Panc1 (cell line): ENCODE measurements at regions of chr17 and their contacts with region 1.

Region 1: DNA sequence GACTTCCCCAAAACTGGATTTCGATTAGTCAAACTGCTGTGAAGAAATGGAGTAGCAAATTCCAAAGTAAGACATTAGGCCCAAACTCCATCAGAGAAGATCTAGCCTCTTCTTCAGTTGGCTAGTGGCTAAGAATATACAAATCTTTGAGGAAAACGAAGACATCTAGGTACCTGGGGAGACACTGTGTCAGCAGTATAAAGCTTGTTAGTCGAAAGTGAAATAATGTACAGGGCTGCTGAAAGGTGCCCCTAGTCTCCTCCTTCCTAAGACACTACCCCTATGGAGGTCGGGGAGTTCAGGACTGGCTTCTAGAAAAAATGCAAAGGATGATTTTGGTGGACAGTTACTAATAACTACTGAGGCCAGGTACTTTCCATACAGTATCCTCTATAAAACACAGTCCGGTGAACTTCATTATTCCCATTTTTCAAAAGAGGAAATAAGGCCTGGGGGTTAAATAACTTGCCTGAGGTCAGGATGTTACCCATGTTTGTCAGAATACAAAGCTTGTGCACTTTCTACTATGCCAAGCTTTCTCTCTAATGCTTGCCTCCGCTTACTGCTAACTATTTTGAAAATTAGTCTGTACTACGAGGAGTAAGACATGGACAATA is 15.0 kb downstream of the DNAJC7 start:
- DNase-seq: no peak
- ATAC-seq: no peak
- H3K4me3 ChIP-seq: no peak overlapping the region
- H3K27ac ChIP-seq: no peak overlapping the region
- H3K4me1 ChIP-seq: no peaks in the 10 kb centered on the region
- H3K27me3 ChIP-seq: no peaks in the 10 kb centered on the region
- CTCF ChIP-seq: no peak

Region 2: DNA sequence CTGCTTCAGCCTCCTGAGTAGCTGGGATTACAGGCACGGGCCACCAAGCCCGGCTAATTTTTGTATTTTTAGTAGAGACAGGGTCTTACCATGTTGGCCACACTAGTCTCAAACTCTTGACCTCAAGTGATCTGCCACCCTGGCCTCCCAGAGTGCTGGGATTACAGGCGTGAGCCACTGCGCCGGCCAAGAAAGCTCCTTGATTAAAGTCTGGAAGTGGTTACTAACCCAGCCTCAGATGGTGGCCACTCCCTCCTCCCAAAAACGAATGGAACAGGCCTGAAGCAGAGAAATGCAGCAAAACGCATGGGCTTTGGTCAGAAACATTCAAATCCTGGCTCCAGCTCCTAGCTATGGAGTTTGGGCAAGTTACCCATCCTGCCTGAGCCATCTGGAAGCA is 178.2 kb before region 1 on chr17:
- CTCF ChIA-PET with region 1: no interaction called
- POLR2A ChIA-PET with region 1: no interaction called
- in situ Hi-C with region 1: no loop called
- intact Hi-C with region 1: no loop called
- DNase-seq: no peak
- ATAC-seq: no peak
- H3K4me3 ChIP-seq: no peak overlapping the region
- H3K27ac ChIP-seq: no peak overlapping the region
- H3K4me1 ChIP-seq: no peaks in the 10 kb centered on the region; the same call in 1 of the 2 replicates
- H3K27me3 ChIP-seq: no peaks in the 10 kb centered on the region
- CTCF ChIP-seq: no peak

Region 3: DNA sequence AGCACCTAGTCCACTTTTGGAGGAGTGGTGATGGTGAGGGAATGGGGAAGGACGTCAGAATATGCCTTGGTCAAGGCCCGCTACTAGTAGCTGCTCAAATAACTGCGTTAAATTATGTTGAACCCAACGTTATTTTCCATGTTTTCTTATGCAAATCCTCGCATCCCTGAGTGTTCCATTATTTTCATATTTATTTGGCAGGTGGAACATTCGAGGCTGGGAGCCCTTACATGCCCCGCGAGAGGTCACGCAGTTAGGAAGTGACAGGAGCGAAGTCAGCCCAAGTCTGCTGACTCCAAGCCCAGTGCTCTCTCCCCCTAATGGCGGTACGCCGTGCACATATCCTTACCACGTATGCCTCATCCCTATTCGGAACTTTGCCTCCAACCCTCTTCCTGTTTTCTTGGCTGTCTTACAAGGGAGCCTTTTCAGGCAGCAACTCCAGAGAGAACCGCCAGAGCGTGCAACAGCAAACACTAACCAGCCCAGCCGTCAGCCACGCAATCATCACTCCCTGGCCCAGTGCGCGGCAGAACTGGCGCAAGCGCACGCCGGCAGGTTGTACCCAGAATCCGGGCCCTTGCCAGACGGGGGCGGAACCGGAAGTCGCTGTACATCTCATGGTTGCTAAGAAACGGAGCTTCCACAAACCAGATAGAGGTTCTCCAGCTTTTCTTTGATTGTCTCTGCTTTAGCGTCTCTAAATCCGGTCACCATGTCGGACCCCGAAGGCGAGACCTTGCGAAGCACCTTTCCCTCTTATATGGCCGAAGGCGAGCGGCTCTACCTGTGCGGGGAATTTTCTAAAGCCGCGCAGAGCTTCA is 72.1 kb before region 1 on chr17 and contains the start of gene ODAD4:
- CTCF ChIA-PET with region 1: no interaction called
- POLR2A ChIA-PET with region 1: interaction called, 11 read pairs
- in situ Hi-C with region 1: no loop called
- intact Hi-C with region 1: no loop called
- DNase-seq: peak; percentile 74
- ATAC-seq: peak; percentile 100
- H3K4me3 ChIP-seq: peak within 1 kb of the TSS; percentile 63 to 69
- H3K27ac ChIP-seq: peak within 1 kb of the TSS; percentile 86
- H3K4me1 ChIP-seq: peaks cover 7% of the 10 kb centered on the region; the same call in 1 of the 2 replicates
- H3K27me3 ChIP-seq: no peaks in the 10 kb centered on the region
- CTCF ChIP-seq: no peak
- total RNA-seq, gene ODAD4: 0.69 TPM